SK-N-SH (cell line): ENCODE measurements at regions of chr7 and their contacts with region 1.

Region 1: DNA sequence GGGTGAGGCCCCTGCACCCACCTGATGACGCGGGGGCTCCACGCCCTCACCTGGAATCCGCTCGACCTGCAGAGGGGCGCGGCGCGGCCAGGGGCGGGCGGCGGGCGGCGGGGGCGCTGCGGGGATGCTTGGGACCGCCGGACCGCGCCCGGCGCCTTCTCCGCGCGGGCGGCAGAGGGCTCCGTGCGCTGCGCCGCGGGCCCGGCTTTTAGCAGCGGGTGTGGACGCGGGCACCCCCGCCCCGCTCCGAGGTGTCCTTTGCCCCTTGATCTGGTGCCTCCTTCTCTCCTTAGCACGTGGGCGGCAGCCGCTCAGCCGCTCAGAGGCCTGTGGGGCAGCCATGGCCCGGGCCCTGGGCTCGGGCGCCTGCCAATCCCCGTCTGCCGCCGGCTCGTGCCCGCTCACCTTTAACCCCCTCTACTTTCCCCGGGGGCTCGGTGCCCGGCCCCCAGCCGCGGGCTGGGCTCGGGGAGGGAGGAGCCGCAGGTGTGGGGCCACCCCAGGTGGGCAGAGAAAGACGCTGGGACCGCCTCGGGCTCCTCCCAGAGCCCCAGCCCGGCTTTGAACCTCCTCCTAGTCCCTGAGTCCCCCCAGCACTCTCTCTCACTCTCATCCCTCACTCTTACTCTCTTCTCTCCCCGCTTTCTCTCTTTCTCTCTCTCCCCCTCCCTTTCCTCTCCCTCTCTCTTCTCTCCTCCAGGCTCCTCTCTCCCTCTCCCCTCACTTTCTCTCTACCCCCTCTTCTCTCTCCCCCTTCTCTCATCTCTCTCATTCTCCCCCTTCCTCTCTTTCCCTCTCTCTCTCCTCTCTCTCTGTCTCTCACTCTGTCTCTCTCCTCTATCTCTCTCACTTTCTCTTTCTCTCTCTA is 19.7 kb upstream of the VPS37D start:
- DNase-seq: peak; percentile 87
- H3K4me3 ChIP-seq: peak overlapping the region; percentile 40 to 41
- H3K27ac ChIP-seq: no peak overlapping the region
- H3K4me1 ChIP-seq: peaks cover 0 to 2% of the 10 kb centered on the region in 2 experiments; a peak in 1 of 4 replicates
- H3K27me3 ChIP-seq: peaks cover 93% of the 10 kb centered on the region
- CTCF ChIP-seq: peak; percentile 25
- EP300 ChIP-seq: no peak
- RAD21 ChIP-seq: peak; percentile 15; the same call in 1 of the 2 replicates

Region 2: DNA sequence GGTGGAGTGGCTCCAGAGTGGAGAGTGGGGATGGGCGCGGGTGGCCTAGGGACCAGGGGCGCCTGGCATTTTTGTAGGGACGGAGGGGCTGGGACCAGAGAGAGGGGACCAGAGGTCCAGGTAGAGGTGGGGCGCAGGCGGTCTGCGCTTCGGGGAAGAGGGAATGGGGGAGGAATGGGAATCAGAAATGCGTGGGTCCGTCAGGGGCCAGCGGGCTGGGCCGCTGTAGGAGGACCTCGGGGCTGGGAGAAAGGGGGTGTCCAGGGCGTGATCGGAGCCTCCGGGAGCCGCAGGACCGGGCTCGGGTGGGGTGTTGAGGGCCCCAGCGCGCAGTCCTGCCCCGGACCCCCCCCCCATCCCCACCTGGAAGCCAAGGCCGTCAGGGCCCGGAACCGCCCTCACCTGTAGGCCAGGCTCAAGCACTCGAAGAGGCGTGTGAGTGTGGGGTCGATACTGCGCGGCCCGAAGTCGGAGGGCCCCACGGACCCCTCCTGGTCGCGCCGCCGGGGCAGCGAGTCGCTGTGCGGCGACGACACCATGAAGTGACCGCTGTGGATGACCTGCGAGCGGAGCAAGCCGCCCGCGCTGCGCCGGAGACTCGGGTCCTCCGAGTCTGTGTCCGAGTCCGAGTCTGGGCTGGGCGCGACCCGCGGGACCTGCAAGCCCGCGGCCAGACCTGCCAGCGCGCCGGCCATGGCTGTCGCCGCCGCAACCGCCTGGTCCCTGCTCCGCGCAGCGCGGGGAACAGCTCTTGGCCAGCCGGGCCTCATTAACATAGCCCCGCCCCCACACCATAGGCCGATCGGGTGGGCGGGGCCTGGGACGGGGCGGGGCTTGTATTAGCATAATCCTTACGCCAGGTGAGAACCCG is 23.9 kb before region 1 on chr7 and contains the start of gene MLXIPL:
- CTCF ChIA-PET with region 1: interaction called, 11 read pairs
- POLR2A ChIA-PET with region 1: no interaction called
- DNase-seq: peak; percentile 100
- H3K4me3 ChIP-seq: peak within 1 kb of the TSS; percentile 48 to 61
- H3K27ac ChIP-seq: no peak within 1 kb of the TSS
- H3K4me1 ChIP-seq: no peaks in the 10 kb centered on the region; a peak in 1 of 4 replicates
- H3K27me3 ChIP-seq: peaks cover 50% of the 10 kb centered on the region
- CTCF ChIP-seq: no peak
- EP300 ChIP-seq: no peak
- RAD21 ChIP-seq: no peak
- polyA plus RNA-seq, gene MLXIPL: 0.21 and 0.32 TPM in 2 replicates

Region 3: DNA sequence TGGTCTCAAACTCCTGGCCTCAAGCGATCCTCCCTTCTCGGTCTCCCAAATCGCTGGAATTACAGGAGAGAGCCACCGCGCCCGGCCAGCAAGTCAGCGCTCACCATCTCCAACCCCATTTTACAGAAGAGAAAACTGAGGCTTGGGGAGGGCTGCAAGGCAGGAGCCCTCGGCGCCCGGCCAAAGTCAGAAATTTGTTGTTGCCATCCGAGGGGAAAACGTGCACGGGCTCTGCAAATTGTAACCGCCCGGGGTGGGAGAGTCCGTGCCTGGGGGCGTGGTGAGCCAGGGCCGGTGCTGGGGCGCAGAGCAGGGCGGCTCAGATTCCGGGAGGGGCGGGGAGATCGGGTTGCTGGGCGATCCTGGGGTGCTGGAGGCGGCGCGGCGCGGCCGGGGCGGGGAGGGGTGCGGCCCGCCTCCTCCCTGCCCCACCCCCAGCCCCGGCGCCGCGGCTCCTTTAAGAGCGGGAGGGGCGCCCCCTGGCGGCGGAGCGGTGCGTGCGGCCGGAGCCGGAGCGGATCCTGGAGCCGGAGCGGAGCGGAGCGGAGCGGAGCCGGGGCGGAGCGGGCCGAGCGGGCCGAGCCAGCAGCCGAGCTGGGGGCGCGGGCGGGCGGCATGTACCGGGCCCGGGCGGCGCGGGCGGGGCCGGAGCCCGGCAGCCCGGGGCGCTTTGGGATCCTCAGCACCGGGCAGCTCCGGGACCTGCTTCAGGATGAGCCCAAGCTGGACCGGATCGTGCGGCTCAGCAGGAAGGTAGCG is 19.6 kb after region 1 on chr7 and contains the start of gene VPS37D:
- CTCF ChIA-PET with region 1: interaction called, 18 read pairs
- POLR2A ChIA-PET with region 1: no interaction called
- DNase-seq: peak; percentile 100
- H3K4me3 ChIP-seq: peak within 1 kb of the TSS; percentile 70 to 75
- H3K27ac ChIP-seq: peak within 1 kb of the TSS in 1 of 2 experiments; percentile 22; a peak in 1 of 4 replicates
- H3K4me1 ChIP-seq: peaks cover 0 to 8% of the 10 kb centered on the region in 2 experiments; a peak in 1 of 4 replicates
- H3K27me3 ChIP-seq: 0 out of 2 replicates have a peak, but pooled peaks cover 6% of the 10 kb centered on the region
- CTCF ChIP-seq: peak; percentile 70
- EP300 ChIP-seq: peak in 1 of 2 experiments; percentile 27; a peak in 2 of 4 replicates
- RAD21 ChIP-seq: peak; percentile 64
- polyA plus RNA-seq, gene VPS37D: 5.7 and 7.4 TPM in 2 replicates

Region 4: GRCh38 chr7:73792594-73793292 is 144.8 kb after region 1 on chr7:
- CTCF ChIA-PET with region 1: no interaction called
- POLR2A ChIA-PET with region 1: no interaction called
- DNase-seq: peak; percentile 78
- H3K4me3 ChIP-seq: no peak overlapping the region
- H3K27ac ChIP-seq: no peak overlapping the region
- H3K4me1 ChIP-seq: no peaks in the 10 kb centered on the region
- H3K27me3 ChIP-seq: no peaks in the 10 kb centered on the region
- CTCF ChIP-seq: no peak
- EP300 ChIP-seq: no peak
- RAD21 ChIP-seq: no peak